Natural killer cell (primary cell): ENCODE measurements at regions of chr14 and their contacts with region 1.

Region 1: GRCh38 chr14:35808076-35808652 is 931 bp downstream of the RALGAPA1 start:
- DNase-seq: peak in 1 of 2 donors; percentile 52
- ATAC-seq: no peak
- H3K4me3 ChIP-seq: peak overlapping the region; percentile 64
- H3K4me3 Mint-ChIP-seq: peak overlapping the region; percentile 99
- H3K27ac ChIP-seq: peak overlapping the region; percentile 89
- H3K27ac Mint-ChIP-seq: peak overlapping the region; percentile 90 to 99
- H3K4me1 ChIP-seq: peaks cover 10% of the 10 kb centered on the region
- H3K4me1 Mint-ChIP-seq: peaks cover 33% of the 10 kb centered on the region in 2 donors
- H3K27me3 ChIP-seq: no peaks in the 10 kb centered on the region
- H3K27me3 Mint-ChIP-seq: no peaks in the 10 kb centered on the region
- CTCF ChIP-seq: no peak

Region 2: DNA sequence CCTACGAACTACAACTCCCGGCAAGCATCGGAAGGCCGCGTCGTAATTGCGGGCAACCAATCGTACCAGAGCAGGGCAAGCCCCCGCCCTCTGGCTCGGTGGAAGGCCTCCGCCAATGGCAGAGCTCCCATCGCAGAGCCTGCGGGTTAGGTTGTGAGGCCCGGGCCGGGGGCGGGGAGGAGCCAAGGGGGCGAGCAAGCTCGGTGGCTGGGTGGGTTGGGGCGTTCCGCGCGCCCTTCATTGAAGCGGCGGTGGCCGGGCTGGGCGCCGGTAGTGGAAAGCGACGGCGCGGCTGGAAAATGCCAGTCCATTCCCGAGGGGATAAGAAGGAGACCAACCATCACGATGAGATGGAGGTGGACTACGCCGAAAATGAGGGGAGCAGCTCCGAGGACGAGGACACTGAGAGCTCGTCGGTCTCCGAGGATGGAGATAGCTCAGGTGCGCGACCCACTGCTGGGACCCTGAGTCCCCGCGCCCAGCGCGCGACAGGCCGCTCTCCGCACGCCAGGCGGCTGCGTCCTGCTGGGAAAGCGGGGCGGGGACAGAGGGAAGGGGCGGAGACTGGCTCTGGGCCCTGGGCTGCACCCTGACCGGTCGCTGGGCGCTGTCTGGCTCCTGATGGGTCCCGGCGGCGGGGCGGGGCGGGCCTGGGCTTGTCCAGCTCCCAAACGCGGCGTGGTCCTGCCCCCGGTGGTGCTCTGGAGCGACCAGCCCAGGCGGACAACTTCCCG is 18.2 kb after region 1 on chr14 and contains the start of gene BRMS1L:
- intact Hi-C with region 1: loop called (anchors 1 kb)
- DNase-seq: peak; percentile 91 to 97
- ATAC-seq: peak; percentile 97 to 100 (median 98)
- H3K4me3 ChIP-seq: peak within 1 kb of the TSS; percentile 99
- H3K4me3 Mint-ChIP-seq: peak within 1 kb of the TSS; percentile 94
- H3K27ac ChIP-seq: peak within 1 kb of the TSS; percentile 89
- H3K27ac Mint-ChIP-seq: peak within 1 kb of the TSS; percentile 72 to 86
- H3K4me1 ChIP-seq: peaks cover 7% of the 10 kb centered on the region
- H3K4me1 Mint-ChIP-seq: peaks cover 12 to 21% of the 10 kb centered on the region in 2 donors
- H3K27me3 ChIP-seq: no peaks in the 10 kb centered on the region
- H3K27me3 Mint-ChIP-seq: no peaks in the 10 kb centered on the region
- CTCF ChIP-seq: no peak
- total RNA-seq, gene BRMS1L: 5.1 to 9.4 (median 6.3) TPM